ENCODE measurements at regions of chr19 and their contacts with region 1.

Region 1: GRCh38 chr19:11551603-11552235 is 7.3 kb downstream of the ELOF1 start:
- DNase-seq: peak; percentile 78
- H3K4me3 ChIP-seq: no peak overlapping the region
- H3K27ac ChIP-seq: no peak overlapping the region
- H3K4me1 ChIP-seq: no peaks in the 10 kb centered on the region; a peak in 1 of 4 replicates
- H3K27me3 ChIP-seq: no peaks in the 10 kb centered on the region
- CTCF ChIP-seq: peak; percentile 50
- EP300 ChIP-seq: no peak
- RAD21 ChIP-seq: peak; percentile 37; the same call in 1 of the 2 replicates

Region 2: DNA sequence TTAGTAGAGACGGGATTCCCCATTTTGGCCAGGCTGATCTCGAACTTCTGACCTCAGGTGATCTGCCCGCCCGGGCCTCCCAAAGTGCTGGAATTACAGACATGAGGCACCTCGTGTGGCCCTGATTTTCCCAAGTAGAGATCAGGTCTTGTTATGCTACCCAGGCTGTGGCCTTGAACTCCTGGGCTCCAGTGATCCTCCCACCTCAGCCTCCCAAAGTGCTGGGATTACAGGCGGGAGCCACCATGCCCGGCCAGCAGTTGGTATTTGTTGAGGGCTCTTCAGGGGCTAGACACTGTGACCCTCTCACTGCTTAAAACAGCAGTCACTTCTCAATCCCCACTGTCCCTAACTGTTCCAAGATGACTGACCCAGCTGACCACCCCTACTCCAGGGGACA is 62.3 kb before region 1 on chr19:
- CTCF ChIA-PET with region 1: no interaction called
- POLR2A ChIA-PET with region 1: no interaction called
- DNase-seq: no peak
- H3K4me3 ChIP-seq: no peak overlapping the region
- H3K27ac ChIP-seq: no peak overlapping the region
- H3K4me1 ChIP-seq: no peaks in the 10 kb centered on the region
- H3K27me3 ChIP-seq: no peaks in the 10 kb centered on the region
- CTCF ChIP-seq: no peak
- EP300 ChIP-seq: no peak
- RAD21 ChIP-seq: no peak

Region 3: DNA sequence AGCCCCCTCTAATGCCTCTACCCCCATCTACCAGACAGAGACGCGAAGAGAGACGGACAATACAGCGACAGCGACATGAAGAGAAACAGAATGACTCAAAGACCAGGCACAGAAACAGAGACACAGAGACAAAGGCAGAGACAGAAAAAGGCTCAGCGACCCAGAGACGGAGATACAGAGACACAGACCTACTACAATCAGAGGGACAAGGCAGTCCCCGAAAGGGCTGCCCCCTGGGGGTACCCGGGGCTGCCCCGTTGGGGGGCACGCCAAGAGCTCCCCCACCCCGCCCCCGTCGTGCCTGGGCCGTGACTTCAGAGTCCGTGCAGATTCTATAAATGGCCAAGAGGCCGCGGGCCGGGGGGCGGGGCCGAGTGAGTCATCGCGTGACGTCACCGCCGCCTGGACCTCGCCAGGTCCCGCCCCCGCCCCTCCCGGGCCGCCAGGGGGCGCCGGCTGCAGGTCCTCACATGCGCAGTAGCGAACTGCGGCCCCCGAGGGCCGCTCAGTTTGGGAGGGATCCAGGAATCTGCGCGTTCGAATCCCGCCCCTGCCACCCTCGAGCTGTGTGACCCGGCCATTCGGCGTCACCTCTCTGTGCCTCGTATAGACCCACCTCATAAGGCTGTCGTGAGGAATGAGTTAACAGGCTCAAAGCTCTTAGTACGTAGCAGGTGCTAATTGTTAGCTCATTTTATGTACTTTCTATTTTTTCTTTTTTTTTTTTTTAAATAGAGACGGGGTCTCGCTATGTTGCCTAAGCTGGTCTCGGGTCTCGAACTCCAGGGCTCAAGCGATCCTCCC is 15.7 kb before region 1 on chr19:
- CTCF ChIA-PET with region 1: interaction called, 10 read pairs
- POLR2A ChIA-PET with region 1: no interaction called
- DNase-seq: peak; percentile 99
- H3K4me3 ChIP-seq: peak overlapping the region; percentile 35 to 43; a peak in 3 of 4 replicates
- H3K27ac ChIP-seq: peak overlapping the region; percentile 64 to 65; a peak in 3 of 4 replicates
- H3K4me1 ChIP-seq: peaks cover 13 to 16% of the 10 kb centered on the region in 2 experiments; a peak in 2 of 4 replicates
- H3K27me3 ChIP-seq: no peaks in the 10 kb centered on the region
- CTCF ChIP-seq: peak; percentile 85
- EP300 ChIP-seq: no peak
- RAD21 ChIP-seq: peak; percentile 38; the same call in 1 of the 2 replicates

Measured in SK-N-SH (cell line).